ENCODE measurements at regions of chr17 and their contacts with region 1.

Region 1: DNA sequence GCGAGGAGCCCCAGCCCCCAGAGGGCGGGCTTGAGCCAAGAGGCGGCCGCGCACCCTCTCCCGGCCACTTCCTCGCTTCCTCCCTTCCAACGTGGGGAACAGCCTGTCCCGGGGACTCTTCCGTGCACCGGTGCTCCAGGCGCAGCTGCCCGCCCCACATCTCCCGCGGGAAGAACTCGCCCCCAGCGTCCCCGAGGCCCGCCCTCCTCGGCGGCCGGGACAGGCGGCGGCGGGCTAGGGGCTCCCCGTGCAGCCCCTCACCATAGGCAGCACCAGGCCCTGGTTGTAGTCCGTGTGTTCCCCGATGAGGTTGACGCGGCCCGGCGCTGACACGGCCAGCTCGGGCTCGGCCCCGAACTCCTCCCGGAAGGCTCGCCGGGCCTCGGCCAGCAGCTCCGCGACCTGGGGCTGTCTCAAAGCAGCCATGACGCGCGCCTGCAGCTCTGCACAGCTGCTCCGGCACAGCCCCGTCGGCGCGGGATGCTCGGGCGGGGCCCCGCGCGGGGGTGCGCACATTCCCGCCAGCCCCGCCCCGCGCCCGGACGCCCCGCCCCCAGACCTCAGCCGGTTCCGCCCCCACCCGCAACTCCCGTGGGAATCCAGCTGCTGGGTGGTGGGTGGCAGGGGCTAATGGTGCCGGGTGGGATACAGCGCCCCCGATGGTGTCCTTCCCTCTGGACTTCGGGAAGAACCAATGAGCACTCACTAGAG is at the start of gene GALK1:
- DNase-seq: peak; percentile 66
- H3K4me3 ChIP-seq: peak within 1 kb of the TSS; percentile 44 to 62 (median 53)
- H3K27ac ChIP-seq: peak within 1 kb of the TSS; percentile 15
- H3K4me1 ChIP-seq: peaks cover 11% of the 10 kb centered on the region
- H3K27me3 ChIP-seq: no peaks in the 10 kb centered on the region
- CTCF ChIP-seq: peak in 1 of 2 donors; percentile 71
- POLR2A ChIP-seq: peak; percentile 34
- total RNA-seq, gene GALK1: 45.8 and 47.0 TPM in 2 replicates

Region 2: GRCh38 chr17:75877752-75878173 is 112.9 kb after region 1 on chr17:
- CTCF ChIA-PET with region 1: interaction called, 11 read pairs
- POLR2A ChIA-PET with region 1: no interaction called
- dilution Hi-C with region 1: no loop called
- intact Hi-C with region 1: no loop called
- DNase-seq: peak; percentile 74
- H3K4me3 ChIP-seq: peak overlapping the region; percentile 1 to 67 (median 66)
- H3K27ac ChIP-seq: peak overlapping the region; percentile 70
- H3K4me1 ChIP-seq: peaks cover 34% of the 10 kb centered on the region
- H3K27me3 ChIP-seq: no peaks in the 10 kb centered on the region
- CTCF ChIP-seq: peak; percentile 33 to 66
- POLR2A ChIP-seq: no peak

Measured in endothelial cell of umbilical vein (primary cell).